ENCODE measurements at regions of chr15 and their contacts with region 1.

Region 1: GRCh38 chr15:74978503-74978902 is 16.9 kb upstream of the SCAMP5 start:
- DNase-seq: no peak
- H3K4me3 ChIP-seq: no peak overlapping the region
- H3K27ac ChIP-seq: no peak overlapping the region
- H3K4me1 ChIP-seq: no peaks in the 10 kb centered on the region
- H3K27me3 ChIP-seq: no peaks in the 10 kb centered on the region
- CTCF ChIP-seq: no peak

Region 2: DNA sequence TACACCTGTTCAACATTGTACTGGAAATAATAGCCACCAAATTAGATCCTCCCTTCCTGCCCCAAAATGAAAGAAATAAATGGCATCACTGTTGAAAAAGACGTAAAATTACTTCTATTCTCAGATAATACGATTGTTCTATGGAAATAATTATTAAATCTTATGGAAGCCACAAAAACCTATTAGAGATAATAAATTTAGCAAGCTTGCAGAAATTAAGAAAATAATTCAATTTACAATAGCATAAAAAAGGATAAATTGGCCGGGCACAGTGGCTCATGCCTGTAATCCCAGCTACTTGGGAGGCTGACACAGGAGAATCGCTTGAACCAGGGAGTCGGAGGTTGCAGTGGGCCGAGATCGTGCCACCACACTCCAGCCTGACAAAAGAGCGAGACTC is 102.6 kb after region 1 on chr15:
- intact Hi-C with region 1: no loop called
- DNase-seq: no peak
- H3K4me3 ChIP-seq: no peak overlapping the region
- H3K27ac ChIP-seq: no peak overlapping the region
- H3K4me1 ChIP-seq: no peaks in the 10 kb centered on the region
- H3K27me3 ChIP-seq: no peaks in the 10 kb centered on the region
- CTCF ChIP-seq: no peak

Region 3: GRCh38 chr15:75321708-75322107 is 343.2 kb after region 1 on chr15:
- intact Hi-C with region 1: loop called (anchors 5 kb)
- DNase-seq: no peak
- H3K4me3 ChIP-seq: no peak overlapping the region
- H3K27ac ChIP-seq: no peak overlapping the region
- H3K4me1 ChIP-seq: no peaks in the 10 kb centered on the region
- H3K27me3 ChIP-seq: no peaks in the 10 kb centered on the region
- CTCF ChIP-seq: no peak

Measured in tibial artery (tissue), 4 donors.